MCF 10A (cell line): ENCODE measurements at regions of chr6 and their contacts with region 1.

Region 1: GRCh38 chr6:33540768-33541167 is 39.3 kb downstream of the BAK1 start:
- DNase-seq: no peak
- H3K4me3 Mint-ChIP-seq: no peak overlapping the region
- H3K27ac Mint-ChIP-seq: no peak overlapping the region
- H3K4me1 Mint-ChIP-seq: no peaks in the 10 kb centered on the region
- H3K27me3 Mint-ChIP-seq: no peaks in the 10 kb centered on the region
- CTCF ChIP-seq: no peak

Region 2: DNA sequence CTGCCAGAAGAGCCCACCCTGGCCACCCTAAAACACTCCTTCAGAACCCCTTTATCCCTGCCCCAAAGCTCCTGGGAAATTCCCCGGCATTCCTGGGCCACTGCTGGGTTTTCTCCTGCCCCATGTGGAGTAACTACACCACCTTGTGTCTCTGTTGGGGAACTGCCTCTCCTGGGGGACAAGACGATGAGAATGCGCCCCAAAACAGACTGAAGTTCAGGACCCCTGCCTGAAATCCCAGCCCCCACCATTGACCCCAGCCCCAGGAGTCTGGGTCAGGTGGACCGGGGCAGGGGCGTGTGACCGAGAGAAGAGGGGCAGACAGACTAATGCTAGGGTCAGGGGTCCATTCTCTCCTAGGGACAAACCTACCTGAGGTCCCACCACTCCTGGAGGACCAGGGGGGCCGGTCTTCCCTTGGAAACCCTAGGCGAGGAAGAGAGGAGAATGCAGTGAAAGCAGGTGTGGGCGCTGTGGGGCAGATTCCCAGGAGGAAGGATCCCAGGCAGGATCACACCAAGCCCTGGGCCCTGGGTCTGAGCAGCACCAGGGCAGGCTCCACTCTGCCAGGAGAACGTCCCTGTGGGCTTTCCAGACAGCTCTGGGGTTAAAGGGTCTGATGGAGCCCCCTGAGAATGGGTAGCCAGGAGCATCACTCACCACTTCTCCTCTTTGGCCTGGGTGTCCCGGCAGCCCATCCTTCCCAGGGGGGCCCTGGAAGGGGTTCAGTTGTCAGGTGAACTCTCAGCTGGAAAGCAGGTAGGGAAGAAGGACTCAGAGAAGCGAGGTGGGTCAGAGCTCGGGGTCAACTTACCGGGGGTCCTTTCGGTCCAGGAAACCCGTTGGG is 367.9 kb before region 1 on chr6:
- CTCF ChIA-PET with region 1: no interaction called
- POLR2A ChIA-PET with region 1: no interaction called
- intact Hi-C with region 1: no loop called
- DNase-seq: peak; percentile 60
- H3K4me3 Mint-ChIP-seq: no peak overlapping the region
- H3K27ac Mint-ChIP-seq: no peak overlapping the region
- H3K4me1 Mint-ChIP-seq: no peaks in the 10 kb centered on the region
- H3K27me3 Mint-ChIP-seq: peaks cover 24% of the 10 kb centered on the region
- CTCF ChIP-seq: peak; percentile 73

Region 3: GRCh38 chr6:33551538-33551937 is 10.8 kb after region 1 on chr6:
- CTCF ChIA-PET with region 1: interaction called, 8 read pairs
- POLR2A ChIA-PET with region 1: interaction called, 22 read pairs
- intact Hi-C with region 1: no loop called
- DNase-seq: no peak
- H3K4me3 Mint-ChIP-seq: no peak overlapping the region
- H3K27ac Mint-ChIP-seq: no peak overlapping the region
- H3K4me1 Mint-ChIP-seq: peaks cover 6% of the 10 kb centered on the region
- H3K27me3 Mint-ChIP-seq: no peaks in the 10 kb centered on the region
- CTCF ChIP-seq: no peak